ENCODE measurements at regions of chr12 and their contacts with region 1.

Region 1: DNA sequence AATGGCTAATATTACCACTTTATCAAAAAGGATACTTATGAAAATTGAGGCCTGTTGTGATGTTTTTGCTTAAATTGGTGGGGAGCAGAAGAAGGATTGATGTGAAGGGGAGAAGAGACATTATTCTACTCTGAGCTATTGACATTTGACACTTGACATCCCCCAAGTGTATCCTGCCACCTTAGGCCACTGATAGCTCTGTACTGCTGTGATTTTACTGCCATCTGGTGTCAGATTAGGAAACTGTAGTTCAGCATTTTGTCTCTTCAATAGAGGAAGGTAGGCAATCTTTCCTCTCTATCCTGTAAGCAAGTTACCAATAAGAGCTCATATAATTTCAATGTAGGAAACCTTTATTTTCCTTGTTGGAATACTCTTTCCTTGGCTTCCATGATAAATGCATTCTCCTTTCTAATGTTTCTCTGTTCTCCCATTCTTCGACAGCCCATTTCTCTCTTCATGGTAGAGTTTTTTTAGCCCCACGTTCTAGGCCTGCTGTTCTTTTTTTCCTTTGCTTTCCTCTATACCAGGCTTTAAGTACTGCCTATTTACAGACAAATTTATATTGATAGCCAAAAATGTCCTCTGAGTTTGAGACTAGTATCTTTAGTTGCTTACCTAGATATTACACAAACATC is 46.3 kb downstream of the PPHLN1 start:
- DNase-seq: peak; percentile 65
- H3K4me3 Mint-ChIP-seq: no peak overlapping the region
- H3K27ac Mint-ChIP-seq: no peak overlapping the region
- H3K4me1 Mint-ChIP-seq: peaks cover 7% of the 10 kb centered on the region
- H3K27me3 Mint-ChIP-seq: no peaks in the 10 kb centered on the region
- CTCF ChIP-seq: peak; percentile 75

Region 2: GRCh38 chr12:42129595-42130204 is 242.6 kb before region 1 on chr12:
- CTCF ChIA-PET with region 1: interaction called, 36 read pairs
- POLR2A ChIA-PET with region 1: interaction called, 5 read pairs
- intact Hi-C with region 1: loop called (anchors 1 kb)
- DNase-seq: peak; percentile 81
- H3K4me3 Mint-ChIP-seq: peak overlapping the region; percentile 66
- H3K27ac Mint-ChIP-seq: peak overlapping the region; percentile 74
- H3K4me1 Mint-ChIP-seq: peaks cover 26% of the 10 kb centered on the region
- H3K27me3 Mint-ChIP-seq: no peaks in the 10 kb centered on the region
- CTCF ChIP-seq: peak; percentile 73

Region 3: DNA sequence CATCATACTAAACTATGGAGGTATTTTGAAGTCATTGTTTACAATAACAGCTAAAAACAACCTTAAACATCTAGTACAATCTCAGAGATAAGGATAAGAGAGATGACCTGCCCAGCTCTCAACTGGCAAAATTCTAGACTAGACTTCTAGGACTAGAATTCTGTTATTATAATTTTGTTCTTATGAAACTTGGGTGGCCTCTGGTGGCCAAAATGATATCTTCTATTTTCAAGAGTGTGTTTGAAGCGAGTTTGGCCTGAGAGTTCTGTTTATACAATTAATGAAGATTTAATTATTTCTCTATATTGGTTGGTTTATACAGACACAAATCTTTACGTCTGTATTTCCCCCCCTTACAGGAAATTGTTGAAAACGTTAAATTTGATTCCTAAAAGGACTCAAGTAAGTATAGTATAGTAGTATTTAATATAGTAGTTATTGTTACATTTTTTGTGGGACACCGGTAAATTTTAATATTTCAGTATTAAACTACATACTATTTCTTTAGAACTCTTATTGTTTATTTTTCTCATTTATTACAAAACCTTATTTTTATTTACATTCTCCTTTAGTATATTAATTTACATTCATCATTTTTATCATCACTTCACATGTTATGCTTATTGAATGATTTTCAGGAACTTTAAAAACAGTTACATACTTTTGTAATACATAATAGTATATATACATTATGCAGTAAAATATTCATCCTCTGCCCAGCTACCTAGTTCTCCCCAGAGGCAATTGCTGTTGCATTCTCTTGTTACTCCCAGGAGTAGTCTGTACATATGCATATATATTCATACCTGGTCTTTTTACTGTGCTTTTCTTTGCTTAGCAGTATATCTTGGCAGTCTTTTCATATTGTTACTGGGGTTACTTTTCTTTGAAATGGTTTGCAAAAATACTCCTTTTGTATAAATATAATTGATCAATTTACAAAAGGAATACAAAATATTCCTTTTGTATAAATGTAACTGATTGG is 39.7 kb before region 1 on chr12:
- CTCF ChIA-PET with region 1: interaction called, 19 read pairs
- POLR2A ChIA-PET with region 1: interaction called, 3 read pairs
- intact Hi-C with region 1: no loop called
- DNase-seq: peak; percentile 53
- H3K4me3 Mint-ChIP-seq: no peak overlapping the region
- H3K27ac Mint-ChIP-seq: peak overlapping the region; percentile 16
- H3K4me1 Mint-ChIP-seq: peaks cover 38% of the 10 kb centered on the region
- H3K27me3 Mint-ChIP-seq: no peaks in the 10 kb centered on the region
- CTCF ChIP-seq: peak; percentile 55

Region 4: DNA sequence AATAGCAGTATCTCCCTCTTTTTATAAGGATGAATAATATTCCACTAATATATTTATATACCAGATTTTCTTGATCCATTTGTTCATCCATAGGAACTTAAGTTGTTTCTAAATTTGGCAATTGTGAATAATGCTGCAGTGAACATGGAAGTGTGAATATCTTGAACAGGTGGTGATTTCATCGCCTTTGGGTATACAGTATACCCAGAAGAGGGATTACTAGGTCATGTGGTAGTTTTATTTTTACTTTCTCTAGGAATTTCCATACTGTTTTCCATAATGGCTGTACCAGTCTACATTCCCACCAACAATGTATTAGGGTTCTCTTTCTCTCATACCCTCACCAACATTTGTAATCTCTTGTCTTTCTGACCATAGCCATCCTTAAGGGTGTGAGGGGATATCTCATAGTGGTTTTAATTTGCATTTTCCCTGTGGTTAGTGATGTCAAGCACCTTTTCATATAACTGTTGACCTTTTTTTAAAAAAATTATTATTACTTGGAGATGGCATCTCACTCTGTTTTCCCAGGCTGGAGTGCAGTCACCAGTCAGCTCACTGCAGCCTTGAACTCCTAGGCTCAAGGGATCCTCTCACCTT is 25.8 kb before region 1 on chr12:
- CTCF ChIA-PET with region 1: interaction called, 31 read pairs
- POLR2A ChIA-PET with region 1: interaction called, 4 read pairs
- intact Hi-C with region 1: no loop called
- DNase-seq: no peak
- H3K4me3 Mint-ChIP-seq: no peak overlapping the region
- H3K27ac Mint-ChIP-seq: no peak overlapping the region
- H3K4me1 Mint-ChIP-seq: peaks cover 12% of the 10 kb centered on the region
- H3K27me3 Mint-ChIP-seq: no peaks in the 10 kb centered on the region
- CTCF ChIP-seq: no peak

Region 5: GRCh38 chr12:42396473-42397259 is 24.4 kb after region 1 on chr12:
- CTCF ChIA-PET with region 1: interaction called, 13 read pairs
- POLR2A ChIA-PET with region 1: interaction called, 5 read pairs
- intact Hi-C with region 1: no loop called
- DNase-seq: no peak
- H3K4me3 Mint-ChIP-seq: no peak overlapping the region
- H3K27ac Mint-ChIP-seq: no peak overlapping the region
- H3K4me1 Mint-ChIP-seq: no peaks in the 10 kb centered on the region
- H3K27me3 Mint-ChIP-seq: no peaks in the 10 kb centered on the region
- CTCF ChIP-seq: no peak

Measured in MCF 10A (cell line).